ENCODE measurements at regions of chr6 and their contacts with region 1.

Region 1: GRCh38 chr6:27687154-27688013 is 214.5 kb upstream of the ZNF184 start:
- DNase-seq: peak; percentile 85 to 87
- H3K4me3 ChIP-seq: peak overlapping the region; percentile 51
- H3K4me3 Mint-ChIP-seq: peak overlapping the region; percentile 78
- H3K27ac Mint-ChIP-seq: peak overlapping the region; percentile 60
- H3K4me1 ChIP-seq: no peaks in the 10 kb centered on the region
- H3K4me1 Mint-ChIP-seq: peaks cover 8% of the 10 kb centered on the region
- H3K27me3 ChIP-seq: no peaks in the 10 kb centered on the region
- H3K27me3 Mint-ChIP-seq: no peaks in the 10 kb centered on the region
- CTCF ChIP-seq: peak; percentile 63 to 81

Region 2: GRCh38 chr6:25921525-25922203 is 1765.7 kb before region 1 on chr6:
- CTCF ChIA-PET with region 1: no interaction called
- POLR2A ChIA-PET with region 1: no interaction called
- intact Hi-C with region 1: no loop called
- DNase-seq: no peak
- H3K4me3 ChIP-seq: no peak overlapping the region
- H3K4me3 Mint-ChIP-seq: no peak overlapping the region
- H3K27ac Mint-ChIP-seq: no peak overlapping the region
- H3K4me1 ChIP-seq: no peaks in the 10 kb centered on the region
- H3K4me1 Mint-ChIP-seq: no peaks in the 10 kb centered on the region
- H3K27me3 ChIP-seq: no peaks in the 10 kb centered on the region
- H3K27me3 Mint-ChIP-seq: no peaks in the 10 kb centered on the region
- CTCF ChIP-seq: no peak

Region 3: DNA sequence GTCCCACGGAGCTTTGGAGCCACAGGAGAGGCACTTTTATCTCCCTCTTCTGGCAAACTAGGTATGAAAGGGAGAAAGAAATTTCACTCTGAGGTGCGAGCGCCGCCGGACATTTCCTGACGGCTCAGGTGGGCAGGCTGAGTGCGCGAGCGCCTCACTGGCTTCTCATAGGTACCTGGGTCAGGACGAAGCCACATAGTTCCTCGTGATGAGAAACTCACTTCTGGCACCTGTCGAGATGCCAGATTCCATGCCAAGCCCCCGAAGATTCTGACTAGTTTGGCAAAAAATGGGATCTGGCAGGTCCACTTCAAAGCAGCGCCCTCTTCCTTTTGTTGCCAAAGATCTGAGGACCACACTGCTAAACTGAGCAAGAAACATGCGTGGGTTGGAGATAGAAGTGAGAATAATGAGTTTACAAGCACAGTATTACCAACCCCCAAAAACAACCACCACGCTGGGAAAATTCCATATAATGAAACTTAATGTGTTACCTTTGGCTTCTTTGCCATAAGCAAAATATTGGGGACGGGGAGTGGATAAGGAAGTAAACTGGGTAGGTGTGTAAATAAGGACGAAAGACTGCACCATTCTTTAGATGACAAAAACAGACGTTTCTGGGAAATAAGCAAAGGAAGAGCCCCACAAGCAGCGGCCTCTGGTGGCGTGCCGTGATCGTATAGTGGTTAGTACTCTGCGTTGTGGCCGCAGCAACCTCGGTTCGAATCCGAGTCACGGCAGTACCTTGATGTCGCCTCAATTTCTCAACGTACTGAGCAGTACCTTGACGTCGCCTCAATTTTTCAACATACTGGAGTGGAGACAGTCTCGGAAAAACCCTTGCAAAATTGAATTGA is 529.7 kb before region 1 on chr6:
- CTCF ChIA-PET with region 1: no interaction called
- POLR2A ChIA-PET with region 1: no interaction called
- intact Hi-C with region 1: no loop called
- DNase-seq: peak; percentile 56 to 62
- H3K4me3 ChIP-seq: peak overlapping the region; percentile 46
- H3K4me3 Mint-ChIP-seq: peak overlapping the region; percentile 75
- H3K27ac Mint-ChIP-seq: peak overlapping the region; percentile 72
- H3K4me1 ChIP-seq: 0 out of 2 replicates have a peak, but pooled peaks cover 6% of the 10 kb centered on the region
- H3K4me1 Mint-ChIP-seq: peaks cover 24% of the 10 kb centered on the region
- H3K27me3 ChIP-seq: no peaks in the 10 kb centered on the region
- H3K27me3 Mint-ChIP-seq: no peaks in the 10 kb centered on the region
- CTCF ChIP-seq: peak in 1 of 2 experiments; percentile 42

Region 4: GRCh38 chr6:27332692-27333641 is 354.4 kb before region 1 on chr6:
- CTCF ChIA-PET with region 1: no interaction called
- POLR2A ChIA-PET with region 1: no interaction called
- intact Hi-C with region 1: loop called (anchors 5 kb)
- DNase-seq: peak; percentile 42 to 55
- H3K4me3 ChIP-seq: peak overlapping the region; percentile 39
- H3K4me3 Mint-ChIP-seq: peak overlapping the region; percentile 80
- H3K27ac Mint-ChIP-seq: peak overlapping the region; percentile 88
- H3K4me1 ChIP-seq: peaks cover 4% of the 10 kb centered on the region
- H3K4me1 Mint-ChIP-seq: peaks cover 13% of the 10 kb centered on the region
- H3K27me3 ChIP-seq: no peaks in the 10 kb centered on the region
- H3K27me3 Mint-ChIP-seq: no peaks in the 10 kb centered on the region
- CTCF ChIP-seq: no peak

Region 5: GRCh38 chr6:27374824-27375612 is 312.4 kb before region 1 on chr6:
- CTCF ChIA-PET with region 1: no interaction called
- POLR2A ChIA-PET with region 1: no interaction called
- intact Hi-C with region 1: no loop called
- DNase-seq: peak; percentile 84 to 87
- H3K4me3 ChIP-seq: peak overlapping the region; percentile 53
- H3K4me3 Mint-ChIP-seq: peak overlapping the region; percentile 82
- H3K27ac Mint-ChIP-seq: peak overlapping the region; percentile 74
- H3K4me1 ChIP-seq: 0 out of 2 replicates have a peak, but pooled peaks cover 3% of the 10 kb centered on the region
- H3K4me1 Mint-ChIP-seq: no peaks in the 10 kb centered on the region
- H3K27me3 ChIP-seq: no peaks in the 10 kb centered on the region
- H3K27me3 Mint-ChIP-seq: no peaks in the 10 kb centered on the region
- CTCF ChIP-seq: no peak

Region 6: GRCh38 chr6:27426045-27426620 is 261.3 kb before region 1 on chr6:
- CTCF ChIA-PET with region 1: no interaction called
- POLR2A ChIA-PET with region 1: no interaction called
- intact Hi-C with region 1: no loop called
- DNase-seq: no peak
- H3K4me3 ChIP-seq: no peak overlapping the region
- H3K4me3 Mint-ChIP-seq: no peak overlapping the region
- H3K27ac Mint-ChIP-seq: no peak overlapping the region
- H3K4me1 ChIP-seq: no peaks in the 10 kb centered on the region
- H3K4me1 Mint-ChIP-seq: no peaks in the 10 kb centered on the region
- H3K27me3 ChIP-seq: no peaks in the 10 kb centered on the region
- H3K27me3 Mint-ChIP-seq: no peaks in the 10 kb centered on the region
- CTCF ChIP-seq: no peak

Region 7: GRCh38 chr6:27518881-27519795 is 168.2 kb before region 1 on chr6:
- CTCF ChIA-PET with region 1: interaction called, 4 read pairs
- POLR2A ChIA-PET with region 1: no interaction called
- intact Hi-C with region 1: loop called (anchors 1 kb)
- DNase-seq: peak; percentile 58 to 77
- H3K4me3 ChIP-seq: peak overlapping the region; percentile 81
- H3K4me3 Mint-ChIP-seq: peak overlapping the region; percentile 85
- H3K27ac Mint-ChIP-seq: peak overlapping the region; percentile 94
- H3K4me1 ChIP-seq: no peaks in the 10 kb centered on the region
- H3K4me1 Mint-ChIP-seq: no peaks in the 10 kb centered on the region
- H3K27me3 ChIP-seq: no peaks in the 10 kb centered on the region
- H3K27me3 Mint-ChIP-seq: no peaks in the 10 kb centered on the region
- CTCF ChIP-seq: peak; percentile 62 to 71

Region 8: GRCh38 chr6:27650620-27651370 is 36.6 kb before region 1 on chr6:
- CTCF ChIA-PET with region 1: no interaction called
- POLR2A ChIA-PET with region 1: no interaction called
- intact Hi-C with region 1: loop called (anchors 5 kb)
- DNase-seq: peak; percentile 81
- H3K4me3 ChIP-seq: peak overlapping the region; percentile 34
- H3K4me3 Mint-ChIP-seq: peak overlapping the region; percentile 78
- H3K27ac Mint-ChIP-seq: peak overlapping the region; percentile 84
- H3K4me1 ChIP-seq: no peaks in the 10 kb centered on the region
- H3K4me1 Mint-ChIP-seq: peaks cover 8% of the 10 kb centered on the region
- H3K27me3 ChIP-seq: no peaks in the 10 kb centered on the region; the same call in 1 of the 2 replicates
- H3K27me3 Mint-ChIP-seq: no peaks in the 10 kb centered on the region
- CTCF ChIP-seq: peak; percentile 43 to 49

Region 9: DNA sequence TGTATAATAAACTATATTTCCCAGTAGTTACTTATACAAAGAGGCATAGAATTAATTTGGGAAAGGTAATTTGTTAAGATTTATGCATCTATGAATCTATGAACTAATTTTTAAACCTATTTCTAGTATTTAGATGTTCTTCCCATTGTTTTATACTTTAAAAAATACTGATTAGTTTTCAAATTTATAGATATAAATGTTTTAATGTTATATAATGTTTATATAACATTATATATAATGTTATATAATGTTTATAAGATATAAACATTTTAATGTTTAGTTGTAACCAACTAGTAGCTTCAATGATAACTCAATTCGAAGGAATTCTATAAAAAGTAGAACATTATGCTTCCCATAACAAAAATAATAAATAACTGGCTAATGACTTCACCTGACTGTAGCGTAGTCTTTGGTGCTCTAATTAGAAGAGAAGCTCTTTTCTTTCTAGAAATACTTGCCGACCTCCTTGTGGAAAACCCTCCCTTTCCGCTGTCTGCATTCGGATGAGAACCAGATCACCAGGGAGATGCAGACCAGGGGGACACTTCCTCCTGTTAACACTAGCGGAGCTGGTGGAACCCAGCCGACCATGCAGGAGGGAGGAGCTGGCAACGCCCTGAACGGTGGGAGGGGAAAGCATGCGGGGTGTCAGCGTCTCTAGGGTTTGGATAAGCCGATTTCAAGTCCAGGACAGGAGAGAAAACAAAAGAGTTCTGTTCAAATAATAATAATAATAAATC is 66.5 kb after region 1 on chr6:
- CTCF ChIA-PET with region 1: interaction called, 13 read pairs
- POLR2A ChIA-PET with region 1: no interaction called
- intact Hi-C with region 1: loop called (anchors 1 kb)
- DNase-seq: peak; percentile 81 to 90
- H3K4me3 ChIP-seq: peak overlapping the region; percentile 47
- H3K4me3 Mint-ChIP-seq: peak overlapping the region; percentile 74
- H3K27ac Mint-ChIP-seq: peak overlapping the region; percentile 83
- H3K4me1 ChIP-seq: no peaks in the 10 kb centered on the region
- H3K4me1 Mint-ChIP-seq: peaks cover 16% of the 10 kb centered on the region
- H3K27me3 ChIP-seq: no peaks in the 10 kb centered on the region
- H3K27me3 Mint-ChIP-seq: no peaks in the 10 kb centered on the region
- CTCF ChIP-seq: peak in 1 of 2 experiments; percentile 13